Right ventricle myocardium superior (tissue), 1 donor: ENCODE measurements at regions of chr1 and their contacts with region 1.

Region 1: GRCh38 chr1:6235296-6235677 is 477 bp downstream of the ICMT start:
- DNase-seq: no peak
- ATAC-seq: no peak

Region 2: GRCh38 chr1:6199298-6200187 is 35.7 kb before region 1 on chr1 and contains the start of gene RPL22:
- intact Hi-C with region 1: loop called (anchors 5 kb)
- DNase-seq: peak; percentile 99
- ATAC-seq: peak; percentile 99
- total RNA-seq, gene RPL22: 234 TPM

Region 3: GRCh38 chr1:6378096-6378746 is 142.9 kb after region 1 on chr1:
- intact Hi-C with region 1: no loop called
- DNase-seq: no peak
- ATAC-seq: no peak